CD14-positive monocyte (primary cell): ENCODE measurements at regions of chr14 and their contacts with region 1.

Region 1: DNA sequence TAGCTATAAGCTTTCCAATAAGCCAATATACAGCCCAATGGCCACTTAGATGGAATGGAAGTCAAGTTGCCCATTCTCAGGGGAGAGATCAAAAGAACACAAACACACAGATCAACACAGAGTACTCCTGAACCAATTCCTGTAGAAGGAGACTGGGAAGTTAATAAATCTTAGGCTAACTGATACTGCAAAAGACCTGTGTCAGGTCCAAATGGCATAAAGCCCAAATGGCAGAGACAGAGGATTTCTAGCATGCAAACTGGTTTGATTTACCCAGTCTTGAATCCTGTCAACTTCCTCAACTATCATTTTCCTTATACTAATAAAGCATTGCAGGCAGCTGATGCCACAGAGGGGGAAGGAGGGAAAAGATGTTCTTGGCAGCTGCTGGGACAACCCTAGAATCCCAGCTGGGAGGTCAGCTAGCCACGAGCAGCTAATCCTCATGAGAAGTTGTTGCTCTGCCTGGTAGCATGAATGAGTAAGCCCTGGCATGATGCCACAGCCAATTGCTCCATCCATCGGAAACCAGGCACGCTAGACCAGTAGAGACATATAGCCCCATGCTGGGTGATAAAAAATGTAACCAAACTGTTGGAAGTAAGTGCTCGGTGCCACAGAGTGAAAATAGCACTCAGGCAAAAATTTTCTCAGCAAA is 26.2 kb downstream of the ANG start:
- DNase-seq: peak; percentile 96 to 99 (median 97)
- H3K4me3 ChIP-seq: peak overlapping the region in 2 of 3 experiments; percentile 39 to 44
- H3K4me3 Mint-ChIP-seq: peak overlapping the region; percentile 63 to 78
- H3K27ac ChIP-seq: peak overlapping the region; percentile 85 to 98
- H3K27ac Mint-ChIP-seq: peak overlapping the region; percentile 99 to 100 (median 100)
- H3K4me1 ChIP-seq: peaks cover 30% of the 10 kb centered on the region in 2 donors
- H3K4me1 Mint-ChIP-seq: peaks cover 27% of the 10 kb centered on the region
- H3K27me3 ChIP-seq: no peaks in the 10 kb centered on the region
- H3K27me3 Mint-ChIP-seq: peaks cover 0 to 3% (median 1%) of the 10 kb centered on the region in 3 donors
- CTCF ChIP-seq: no peak

Region 2: DNA sequence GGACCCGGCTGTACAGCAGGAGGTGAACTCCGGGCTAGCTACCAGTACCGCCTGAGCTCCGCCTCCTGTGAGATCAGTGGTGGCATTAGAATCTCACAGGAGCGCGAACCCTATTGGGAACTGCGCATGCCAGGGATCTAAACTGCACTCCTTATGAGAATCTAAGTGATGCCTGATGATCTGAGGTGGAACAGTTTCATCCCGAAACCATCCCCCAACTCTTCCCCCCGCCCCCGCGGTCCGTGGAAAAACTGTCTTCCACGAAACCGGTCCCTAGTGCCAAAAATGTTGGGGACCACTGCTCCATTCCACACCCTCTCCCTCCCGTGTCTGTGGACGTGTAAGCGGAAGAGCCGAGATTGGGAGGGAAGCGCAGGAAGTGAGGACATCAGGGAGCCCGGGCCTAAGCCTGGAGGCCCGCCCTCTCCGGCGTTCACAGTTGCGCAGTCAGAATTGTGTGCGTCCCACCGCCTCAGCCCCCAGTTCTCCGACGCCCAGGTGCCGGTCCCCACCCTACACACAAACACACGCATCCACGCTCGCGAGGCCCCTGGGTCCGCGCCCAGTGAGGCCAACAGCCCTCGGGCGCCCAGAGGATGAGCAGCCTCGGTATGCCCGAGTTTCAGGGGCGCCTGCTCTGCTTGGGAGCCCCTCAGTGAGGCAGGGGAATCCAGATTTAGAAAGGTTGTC is 32.1 kb before region 1 on chr14:
- intact Hi-C with region 1: no loop called
- DNase-seq: peak; percentile 83 to 87 (median 85)
- H3K4me3 ChIP-seq: peak overlapping the region; percentile 84 to 91 (median 86)
- H3K4me3 Mint-ChIP-seq: no peak overlapping the region
- H3K27ac ChIP-seq: peak overlapping the region; percentile 96 to 99
- H3K27ac Mint-ChIP-seq: no peak overlapping the region
- H3K4me1 ChIP-seq: peaks cover 61% of the 10 kb centered on the region in 2 donors
- H3K4me1 Mint-ChIP-seq: peaks cover 50% of the 10 kb centered on the region
- H3K27me3 ChIP-seq: no peaks in the 10 kb centered on the region
- H3K27me3 Mint-ChIP-seq: peaks cover 0 to 9% (median 0%) of the 10 kb centered on the region in 3 donors
- CTCF ChIP-seq: no peak

Region 3: GRCh38 chr14:20794644-20795369 is 80.1 kb after region 1 on chr14:
- intact Hi-C with region 1: loop called in 1 of 2 experiments (anchors 5 kb)
- DNase-seq: peak; percentile 59 to 87 (median 75)
- H3K4me3 ChIP-seq: peak overlapping the region in 1 of 3 experiments; percentile 55
- H3K4me3 Mint-ChIP-seq: peak overlapping the region in 1 of 2 donors; percentile 62
- H3K27ac ChIP-seq: peak overlapping the region; percentile 44 to 82
- H3K27ac Mint-ChIP-seq: peak overlapping the region; percentile 87 to 97 (median 95)
- H3K4me1 ChIP-seq: peaks cover 81 to 95% of the 10 kb centered on the region in 2 donors
- H3K4me1 Mint-ChIP-seq: peaks cover 78% of the 10 kb centered on the region
- H3K27me3 ChIP-seq: no peaks in the 10 kb centered on the region
- H3K27me3 Mint-ChIP-seq: peaks cover 0 to 3% (median 1%) of the 10 kb centered on the region in 3 donors
- CTCF ChIP-seq: no peak